ENCODE measurements at regions of chr1 and their contacts with region 1.

Region 1: GRCh38 chr1:61588736-61589672 is 135.9 kb downstream of the TM2D1 start:
- DNase-seq: peak; percentile 80
- H3K4me3 Mint-ChIP-seq: no peak overlapping the region
- H3K27ac Mint-ChIP-seq: no peak overlapping the region
- H3K4me1 Mint-ChIP-seq: peaks cover 25% of the 10 kb centered on the region
- H3K27me3 Mint-ChIP-seq: no peaks in the 10 kb centered on the region
- CTCF ChIP-seq: peak; percentile 80

Region 2: DNA sequence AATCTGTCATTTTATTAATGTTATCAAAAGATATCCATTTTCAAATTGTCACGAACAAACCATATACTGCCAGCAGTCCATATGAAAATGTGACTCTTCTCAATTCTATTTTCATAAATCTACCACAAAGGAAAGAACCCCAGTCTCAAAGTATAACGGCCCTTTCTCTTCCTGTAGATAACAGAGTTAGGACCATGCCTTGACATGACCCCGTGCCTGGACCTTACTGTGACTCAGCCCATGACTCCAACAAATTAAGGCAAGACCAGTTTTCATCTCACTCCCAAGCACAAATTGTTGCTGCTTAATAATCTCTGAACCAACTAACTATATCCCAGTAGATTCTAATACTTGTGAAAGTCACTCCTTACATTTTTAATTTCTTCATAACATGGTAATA is 631.0 kb before region 1 on chr1:
- CTCF ChIA-PET with region 1: no interaction called
- POLR2A ChIA-PET with region 1: no interaction called
- intact Hi-C with region 1: no loop called
- DNase-seq: no peak
- H3K4me3 Mint-ChIP-seq: no peak overlapping the region
- H3K27ac Mint-ChIP-seq: no peak overlapping the region
- H3K4me1 Mint-ChIP-seq: no peaks in the 10 kb centered on the region
- H3K27me3 Mint-ChIP-seq: peaks cover 4% of the 10 kb centered on the region
- CTCF ChIP-seq: no peak

Region 3: DNA sequence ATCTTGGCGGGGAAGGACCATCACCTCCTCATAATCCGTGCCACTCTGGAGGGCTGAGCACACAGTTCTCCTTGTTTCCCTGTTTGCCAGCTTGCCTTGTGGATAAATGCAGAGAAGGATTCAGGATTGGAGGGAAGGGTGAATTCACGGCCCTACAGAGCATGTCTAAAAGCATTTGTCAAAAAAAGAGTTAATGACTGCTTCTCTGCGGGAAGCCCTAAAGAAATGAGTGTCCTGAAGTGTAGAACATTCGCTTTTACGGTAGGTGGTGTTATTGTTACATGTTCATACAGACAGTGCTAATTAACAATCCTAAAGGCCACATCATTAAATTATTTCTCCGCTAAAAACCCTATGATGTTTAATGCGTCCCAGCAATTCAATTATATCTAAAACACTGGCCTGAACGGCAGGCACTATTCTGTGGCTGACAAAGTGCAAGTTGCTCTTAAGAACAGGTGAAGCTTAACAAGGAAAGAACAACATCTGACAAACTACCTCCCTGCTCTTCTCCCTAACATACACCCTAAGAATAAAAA is 619.0 kb before region 1 on chr1:
- CTCF ChIA-PET with region 1: interaction called, 4 read pairs
- POLR2A ChIA-PET with region 1: no interaction called
- intact Hi-C with region 1: loop called (anchors 2 kb)
- DNase-seq: peak; percentile 43
- H3K4me3 Mint-ChIP-seq: no peak overlapping the region
- H3K27ac Mint-ChIP-seq: no peak overlapping the region
- H3K4me1 Mint-ChIP-seq: peaks cover 18% of the 10 kb centered on the region
- H3K27me3 Mint-ChIP-seq: no peaks in the 10 kb centered on the region
- CTCF ChIP-seq: peak; percentile 46

Region 4: DNA sequence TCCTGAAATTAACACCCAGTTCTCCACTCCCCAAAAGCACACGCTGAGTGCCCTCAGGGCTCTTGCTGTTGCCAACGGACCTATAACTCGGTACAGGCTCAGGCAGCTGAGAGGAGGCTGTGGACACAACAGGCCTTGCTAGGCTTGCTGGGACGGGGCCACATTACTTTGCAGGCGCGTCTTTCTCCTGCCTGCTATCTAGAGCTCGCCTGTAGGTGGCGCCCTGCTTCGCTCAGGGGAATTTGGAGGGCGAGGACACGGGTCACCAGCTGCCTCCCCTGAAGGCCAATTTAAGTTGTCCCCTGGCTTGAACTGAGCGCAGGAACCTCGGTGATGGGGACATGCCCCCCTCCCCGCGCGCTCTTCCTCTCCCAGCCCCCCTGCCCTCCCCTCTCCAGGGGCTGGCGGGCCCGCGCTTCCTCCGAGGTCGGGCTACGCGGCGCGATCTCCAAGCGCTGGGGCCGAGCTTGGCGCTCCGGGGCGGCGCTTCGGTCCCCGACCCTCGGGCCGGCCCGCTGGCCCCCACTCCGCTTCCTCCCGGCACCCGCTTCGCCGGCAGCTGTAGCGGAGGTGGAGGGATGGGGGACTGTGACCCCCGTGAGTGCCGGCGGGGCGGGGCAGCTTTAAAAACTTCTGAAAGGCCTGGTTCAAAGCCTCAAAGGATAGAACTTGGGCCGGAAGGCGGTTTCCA is 539.0 kb before region 1 on chr1:
- CTCF ChIA-PET with region 1: interaction called, 8 read pairs
- POLR2A ChIA-PET with region 1: no interaction called
- intact Hi-C with region 1: loop called (anchors 1 kb)
- DNase-seq: peak; percentile 90
- H3K4me3 Mint-ChIP-seq: peak overlapping the region; percentile 76
- H3K27ac Mint-ChIP-seq: peak overlapping the region; percentile 19
- H3K4me1 Mint-ChIP-seq: peaks cover 20% of the 10 kb centered on the region
- H3K27me3 Mint-ChIP-seq: no peaks in the 10 kb centered on the region
- CTCF ChIP-seq: peak; percentile 93

Region 5: GRCh38 chr1:61287734-61288133 is 301.3 kb before region 1 on chr1:
- CTCF ChIA-PET with region 1: no interaction called
- POLR2A ChIA-PET with region 1: no interaction called
- intact Hi-C with region 1: loop called (anchors 2 kb)
- DNase-seq: peak; percentile 57
- H3K4me3 Mint-ChIP-seq: no peak overlapping the region
- H3K27ac Mint-ChIP-seq: peak overlapping the region; percentile 53
- H3K4me1 Mint-ChIP-seq: peaks cover 43% of the 10 kb centered on the region
- H3K27me3 Mint-ChIP-seq: no peaks in the 10 kb centered on the region
- CTCF ChIP-seq: no peak

Region 6: DNA sequence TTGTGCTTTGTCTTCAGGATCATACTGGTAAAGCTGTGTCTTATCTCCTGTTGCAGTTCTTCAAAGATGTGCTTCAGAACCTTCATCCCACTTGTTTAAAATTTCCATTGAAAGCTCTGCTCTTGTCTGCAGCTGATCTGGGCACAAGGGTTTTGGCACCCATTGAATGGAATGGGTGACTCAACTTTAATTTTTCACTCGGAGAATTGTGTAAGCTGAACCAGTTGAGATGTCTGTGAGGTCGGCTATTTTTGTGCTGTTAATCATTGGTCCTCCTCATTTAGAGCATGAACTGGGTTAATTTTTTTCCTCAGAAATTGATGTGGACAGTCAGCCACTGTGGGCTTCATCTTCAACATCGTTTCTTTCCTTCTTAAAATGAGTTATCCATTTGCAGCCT is 116.1 kb before region 1 on chr1:
- CTCF ChIA-PET with region 1: interaction called, 3 read pairs
- POLR2A ChIA-PET with region 1: interaction called, 3 read pairs
- intact Hi-C with region 1: loop called (anchors 5 kb)
- DNase-seq: peak; percentile 79
- H3K4me3 Mint-ChIP-seq: no peak overlapping the region
- H3K27ac Mint-ChIP-seq: no peak overlapping the region
- H3K4me1 Mint-ChIP-seq: peaks cover 15% of the 10 kb centered on the region
- H3K27me3 Mint-ChIP-seq: no peaks in the 10 kb centered on the region
- CTCF ChIP-seq: no peak

Region 7: DNA sequence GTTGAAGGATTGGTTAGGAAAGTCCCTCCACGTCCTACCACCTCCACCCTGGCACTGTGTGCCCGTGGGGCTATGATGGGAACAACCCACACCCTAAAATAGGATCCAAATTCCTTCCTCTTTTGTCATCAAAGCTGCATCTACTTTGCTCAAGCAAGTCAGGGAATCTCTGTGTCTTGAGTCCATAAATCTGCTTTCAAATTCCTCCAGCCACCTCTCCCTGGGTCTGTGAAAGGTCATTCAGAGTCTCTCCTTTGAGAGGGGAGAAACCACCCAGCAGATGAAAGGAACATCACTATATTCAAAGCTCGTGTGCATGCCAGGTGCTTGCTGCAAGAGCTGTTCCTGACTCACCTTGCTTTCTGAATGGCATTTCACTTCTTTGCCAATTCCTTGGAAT is 107.7 kb before region 1 on chr1:
- CTCF ChIA-PET with region 1: interaction called, 19 read pairs
- POLR2A ChIA-PET with region 1: interaction called, 18 read pairs
- intact Hi-C with region 1: no loop called
- DNase-seq: peak; percentile 83
- H3K4me3 Mint-ChIP-seq: peak overlapping the region; percentile 49
- H3K27ac Mint-ChIP-seq: peak overlapping the region; percentile 83
- H3K4me1 Mint-ChIP-seq: peaks cover 24% of the 10 kb centered on the region
- H3K27me3 Mint-ChIP-seq: no peaks in the 10 kb centered on the region
- CTCF ChIP-seq: no peak

Region 8: GRCh38 chr1:61851849-61852669 is 263.1 kb after region 1 on chr1:
- CTCF ChIA-PET with region 1: interaction called, 6 read pairs
- POLR2A ChIA-PET with region 1: interaction called, 3 read pairs
- intact Hi-C with region 1: loop called (anchors 2 kb)
- DNase-seq: peak; percentile 74
- H3K4me3 Mint-ChIP-seq: no peak overlapping the region
- H3K27ac Mint-ChIP-seq: no peak overlapping the region
- H3K4me1 Mint-ChIP-seq: no peaks in the 10 kb centered on the region
- H3K27me3 Mint-ChIP-seq: no peaks in the 10 kb centered on the region
- CTCF ChIP-seq: peak; percentile 53